Posterior cingulate gyrus (tissue), 11 donors: ENCODE measurements at regions of chr21 and their contacts with region 1.

Region 1: GRCh38 chr21:42440187-42440792 is 36.6 kb downstream of the UBASH3A start:
- DNase-seq: peak in 2 of 10 donors; percentile 42 to 59

Region 2: GRCh38 chr21:42340187-42341050 is 99.9 kb before region 1 on chr21:
- intact Hi-C with region 1: loop called (anchors 10 kb)
- DNase-seq: peak in 1 of 10 donors; percentile 55

Region 3: GRCh38 chr21:42781150-42781970 is 341.1 kb after region 1 on chr21:
- intact Hi-C with region 1: no loop called
- DNase-seq: peak in 2 of 10 donors; percentile 16 to 85